Prostate gland (tissue), 2 donors: ENCODE measurements at regions of chr11 and their contacts with region 1.

Region 1: GRCh38 chr11:69088676-69089146 is 40.0 kb downstream of the TPCN2 start:
- DNase-seq: peak; percentile 72
- H3K4me3 ChIP-seq: no peak overlapping the region
- H3K27ac ChIP-seq: no peak overlapping the region
- H3K4me1 ChIP-seq: no peaks in the 10 kb centered on the region
- H3K27me3 ChIP-seq: no peaks in the 10 kb centered on the region
- CTCF ChIP-seq: peak; percentile 52 to 77 (median 72)
- POLR2A ChIP-seq: no peak

Region 2: GRCh38 chr11:68741463-68741862 is 347.2 kb before region 1 on chr11:
- intact Hi-C with region 1: no loop called
- DNase-seq: no peak
- H3K4me3 ChIP-seq: no peak overlapping the region
- H3K27ac ChIP-seq: no peak overlapping the region
- H3K4me1 ChIP-seq: no peaks in the 10 kb centered on the region
- H3K27me3 ChIP-seq: no peaks in the 10 kb centered on the region
- CTCF ChIP-seq: no peak
- POLR2A ChIP-seq: no peak

Region 3: DNA sequence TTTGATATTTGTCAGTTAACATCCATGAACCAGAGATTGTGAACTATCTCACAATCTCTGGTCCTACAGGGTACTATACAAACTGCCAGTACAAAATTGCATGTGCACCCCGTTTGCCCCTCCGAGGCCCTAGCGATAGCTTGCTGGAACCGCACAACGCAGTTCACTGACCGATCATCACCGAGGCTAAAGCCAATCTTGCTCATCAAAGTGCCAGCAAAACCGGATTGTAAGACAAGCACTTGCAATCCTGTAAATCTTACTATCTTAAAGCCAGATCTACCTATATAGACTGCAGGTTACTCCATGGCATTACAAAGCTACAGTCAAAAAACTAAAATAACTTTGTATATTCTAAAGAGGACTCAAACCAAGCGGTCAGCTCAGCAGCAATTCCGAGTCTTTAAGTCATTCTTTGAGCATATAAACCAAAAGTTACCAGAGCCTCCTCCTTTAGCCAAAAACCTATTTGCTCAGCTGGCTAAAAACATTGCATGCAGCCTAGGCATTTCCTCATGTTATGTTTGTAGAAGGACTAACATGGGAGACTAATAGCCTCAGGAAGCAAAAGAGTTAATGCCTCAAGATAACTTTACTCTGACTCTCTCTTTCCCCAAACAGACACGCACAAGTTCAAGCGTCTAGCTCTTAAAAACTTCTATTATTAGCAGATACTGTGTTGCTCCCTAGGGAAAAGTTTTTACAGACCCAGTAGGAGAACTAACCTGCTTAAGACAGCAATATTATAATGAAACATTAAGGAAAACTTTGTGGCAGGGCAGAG is 216.3 kb before region 1 on chr11:
- intact Hi-C with region 1: no loop called
- DNase-seq: peak; percentile 20
- H3K4me3 ChIP-seq: no peak overlapping the region
- H3K27ac ChIP-seq: peak overlapping the region; percentile 47 to 58
- H3K4me1 ChIP-seq: peaks cover 7% of the 10 kb centered on the region
- H3K27me3 ChIP-seq: no peaks in the 10 kb centered on the region
- CTCF ChIP-seq: no peak
- POLR2A ChIP-seq: no peak

Region 4: GRCh38 chr11:68903288-68904247 is 185.1 kb before region 1 on chr11 and contains the starts of genes IGHMBP2 and MRPL21:
- intact Hi-C with region 1: loop called (anchors 5 kb)
- DNase-seq: peak; percentile 80
- H3K4me3 ChIP-seq: peak within 1 kb of the TSS; percentile 79 to 91
- H3K27ac ChIP-seq: peak within 1 kb of the TSS; percentile 85 to 88
- H3K4me1 ChIP-seq: no peaks in the 10 kb centered on the region
- H3K27me3 ChIP-seq: no peaks in the 10 kb centered on the region
- CTCF ChIP-seq: peak in 1 of 4 experiments; percentile 9
- POLR2A ChIP-seq: peak; percentile 36
- total RNA-seq, gene IGHMBP2: 17.3 to 34.0 TPM
- total RNA-seq, gene MRPL21: 41.1 to 76.9 TPM

Region 5: DNA sequence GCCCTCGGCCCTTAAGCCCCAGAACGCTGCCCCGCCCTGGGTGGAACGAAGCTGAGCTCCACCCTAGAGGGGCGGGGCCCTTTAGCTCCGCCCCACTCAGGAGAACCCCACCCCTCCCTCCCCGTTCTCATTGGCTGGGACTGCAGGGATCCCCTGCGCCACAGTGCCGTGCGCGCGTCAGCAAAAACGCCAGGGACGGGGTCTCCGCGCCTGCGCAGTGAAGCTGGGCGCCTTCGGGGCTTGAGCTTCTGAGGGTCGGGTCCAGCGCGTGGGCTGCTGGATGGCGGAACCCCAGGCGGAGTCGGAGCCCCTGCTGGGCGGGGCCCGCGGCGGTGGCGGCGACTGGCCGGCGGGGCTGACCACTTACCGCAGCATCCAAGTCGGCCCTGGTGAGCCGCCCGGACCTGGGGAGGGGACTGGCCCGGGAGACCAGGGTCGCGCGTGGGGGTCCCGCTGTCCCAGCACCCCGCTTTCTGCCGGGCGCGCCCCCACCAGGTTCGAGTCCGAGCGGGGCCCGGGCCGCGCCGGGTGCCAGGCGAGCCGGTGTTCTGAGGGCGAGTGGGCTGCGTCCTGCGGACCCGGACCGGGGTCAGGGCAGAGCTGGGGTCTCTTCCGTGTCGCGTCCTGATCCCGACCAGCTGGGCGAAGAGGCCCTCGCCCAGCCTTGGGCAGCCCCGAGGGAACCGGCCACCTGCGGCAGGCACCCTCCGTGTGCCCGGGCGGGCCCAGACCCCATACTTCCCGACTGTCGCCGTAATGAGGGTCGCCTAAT is 39.8 kb before region 1 on chr11 and contains the start of gene TPCN2:
- intact Hi-C with region 1: loop called (anchors 5 kb)
- DNase-seq: peak; percentile 91
- H3K4me3 ChIP-seq: peak within 1 kb of the TSS; percentile 89 to 100
- H3K27ac ChIP-seq: peak within 1 kb of the TSS; percentile 87 to 94
- H3K4me1 ChIP-seq: peaks cover 16% of the 10 kb centered on the region
- H3K27me3 ChIP-seq: no peaks in the 10 kb centered on the region
- CTCF ChIP-seq: peak in 1 of 4 experiments; percentile 22
- POLR2A ChIP-seq: peak; percentile 86
- total RNA-seq, gene TPCN2: 17.6 to 31.0 TPM

Region 6: GRCh38 chr11:69115586-69116560 is 27.2 kb after region 1 on chr11:
- intact Hi-C with region 1: no loop called
- DNase-seq: peak; percentile 52
- H3K4me3 ChIP-seq: no peak overlapping the region
- H3K27ac ChIP-seq: peak overlapping the region in 1 of 2 donors; percentile 38
- H3K4me1 ChIP-seq: no peaks in the 10 kb centered on the region
- H3K27me3 ChIP-seq: no peaks in the 10 kb centered on the region
- CTCF ChIP-seq: no peak
- POLR2A ChIP-seq: no peak